ENCODE measurements at regions of chr1 and their contacts with region 1.

Region 1: GRCh38 chr1:159854693-159855192 is 7.7 kb downstream of the VSIG8 start:
- DNase-seq: peak; percentile 96
- H3K4me3 ChIP-seq: peak overlapping the region; percentile 72 to 89 (median 80)
- H3K27ac ChIP-seq: peak overlapping the region; percentile 91 to 96 (median 95)
- H3K4me1 ChIP-seq: peaks cover 8 to 33% (median 25%) of the 10 kb centered on the region in 4 donors
- H3K27me3 ChIP-seq: no peaks in the 10 kb centered on the region
- CTCF ChIP-seq: peak in 2 of 3 experiments; percentile 12 to 28
- EP300 ChIP-seq: no peak
- POLR2A ChIP-seq: peak; percentile 22

Region 2: DNA sequence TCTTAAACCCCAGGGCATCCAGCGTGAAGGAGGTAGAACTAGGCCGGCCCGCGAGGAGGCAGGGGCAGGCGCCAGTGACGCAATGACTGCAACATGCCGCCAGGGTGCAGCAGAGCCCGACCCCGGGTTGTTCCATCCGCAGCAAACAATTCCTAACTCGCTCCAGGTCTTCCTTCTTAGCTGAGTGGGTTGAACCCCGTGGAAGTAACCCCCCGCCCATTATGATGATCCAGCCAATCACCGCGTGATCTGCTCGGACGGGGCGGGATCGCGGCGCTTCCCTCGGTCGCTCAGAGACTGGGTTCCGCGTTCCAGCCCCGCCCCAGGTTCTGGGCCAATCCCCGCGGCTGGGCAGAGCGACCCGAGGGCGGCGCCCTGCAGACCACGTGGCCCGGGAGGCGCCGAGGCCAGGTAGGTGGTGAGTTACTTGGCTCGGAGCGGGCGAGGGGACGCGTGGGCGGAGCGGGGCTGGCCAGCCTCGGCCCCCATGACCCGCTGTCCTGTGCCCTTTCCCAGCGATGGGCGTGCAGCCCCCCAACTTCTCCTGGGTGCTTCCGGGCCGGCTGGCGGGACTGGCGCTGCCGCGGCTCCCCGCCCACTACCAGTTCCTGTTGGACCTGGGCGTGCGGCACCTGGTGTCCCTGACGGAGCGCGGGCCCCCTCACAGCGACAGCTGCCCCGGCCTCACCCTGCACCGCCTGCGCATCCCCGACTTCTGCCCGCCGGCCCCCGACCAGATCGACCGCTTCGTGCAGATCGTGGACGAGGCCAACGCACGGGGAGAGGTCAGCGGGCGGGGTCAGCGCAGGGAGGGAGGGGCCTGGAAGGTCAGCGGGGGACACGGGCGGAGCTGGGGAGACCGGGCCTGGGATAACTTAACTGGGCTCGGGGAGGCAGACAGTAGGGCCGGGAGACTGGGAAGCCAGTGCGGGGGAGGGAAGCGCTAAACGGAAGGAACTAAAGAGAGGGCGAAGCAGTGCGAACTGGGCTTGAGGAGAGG is 73.9 kb before region 1 on chr1 and contains the start of gene DUSP23:
- intact Hi-C with region 1: no loop called
- DNase-seq: peak; percentile 100
- H3K4me3 ChIP-seq: peak within 1 kb of the TSS; percentile 70 to 95 (median 76)
- H3K27ac ChIP-seq: peak within 1 kb of the TSS; percentile 76 to 84 (median 81)
- H3K4me1 ChIP-seq: peaks cover 15 to 29% (median 17%) of the 10 kb centered on the region in 4 donors
- H3K27me3 ChIP-seq: no peaks in the 10 kb centered on the region
- CTCF ChIP-seq: peak; percentile 95 to 99 (median 97)
- EP300 ChIP-seq: no peak
- POLR2A ChIP-seq: peak; percentile 47
- total RNA-seq, gene DUSP23: 43.2 to 75.2 (median 50.1) TPM

Region 3: GRCh38 chr1:159924981-159925712 is 70.4 kb after region 1 on chr1 and contains the start of gene TAGLN2:
- intact Hi-C with region 1: loop called (anchors 2 kb)
- DNase-seq: peak; percentile 98
- H3K4me3 ChIP-seq: peak within 1 kb of the TSS; percentile 79 to 95 (median 88)
- H3K27ac ChIP-seq: peak within 1 kb of the TSS; percentile 89 to 97 (median 92)
- H3K4me1 ChIP-seq: peaks cover 34 to 55% (median 50%) of the 10 kb centered on the region in 4 donors
- H3K27me3 ChIP-seq: no peaks in the 10 kb centered on the region
- CTCF ChIP-seq: no peak
- EP300 ChIP-seq: no peak
- POLR2A ChIP-seq: peak; percentile 81
- total RNA-seq, gene TAGLN2: 125 to 276 (median 228) TPM

Measured in esophagus muscularis mucosa (tissue), 4 donors.